Right cardiac atrium (tissue), 5 donors: ENCODE measurements at regions of chr17 and their contacts with region 1.

Region 1: DNA sequence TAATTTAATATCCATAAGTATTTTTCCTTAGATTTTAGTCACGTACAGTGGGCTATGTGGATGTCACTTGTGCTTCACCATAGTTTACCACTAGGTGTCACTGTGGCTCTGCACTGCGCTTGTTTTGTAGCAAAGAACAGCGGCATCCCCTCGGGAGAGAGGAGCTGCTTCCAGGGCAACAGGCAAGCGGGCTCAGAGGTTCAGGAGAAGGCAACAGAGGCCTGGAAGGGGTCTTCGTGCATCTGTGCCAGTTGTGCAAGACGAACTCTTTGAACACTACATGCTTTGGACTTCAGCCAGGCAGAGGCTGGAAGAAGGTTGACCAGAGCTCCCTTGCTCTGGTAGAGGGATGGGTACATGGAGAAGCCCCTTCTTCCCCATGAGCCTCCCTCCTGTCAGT is 20.6 kb downstream of the CYB561 start:
- DNase-seq: peak; percentile 74 to 89 (median 84)
- ATAC-seq: peak; percentile 73 to 82
- H3K4me3 ChIP-seq: no peak overlapping the region
- H3K27ac ChIP-seq: no peak overlapping the region
- H3K4me1 ChIP-seq: peaks cover 2% of the 10 kb centered on the region
- H3K27me3 ChIP-seq: no peaks in the 10 kb centered on the region

Region 2: GRCh38 chr17:63611354-63611753 is 185.9 kb after region 1 on chr17:
- intact Hi-C with region 1: loop called (anchors 2 to 5 kb)
- DNase-seq: no peak
- ATAC-seq: no peak
- H3K4me3 ChIP-seq: no peak overlapping the region
- H3K27ac ChIP-seq: no peak overlapping the region
- H3K4me1 ChIP-seq: no peaks in the 10 kb centered on the region
- H3K27me3 ChIP-seq: no peaks in the 10 kb centered on the region